H1 (cell line): ENCODE measurements at regions of chr14 and their contacts with region 1.

Region 1: DNA sequence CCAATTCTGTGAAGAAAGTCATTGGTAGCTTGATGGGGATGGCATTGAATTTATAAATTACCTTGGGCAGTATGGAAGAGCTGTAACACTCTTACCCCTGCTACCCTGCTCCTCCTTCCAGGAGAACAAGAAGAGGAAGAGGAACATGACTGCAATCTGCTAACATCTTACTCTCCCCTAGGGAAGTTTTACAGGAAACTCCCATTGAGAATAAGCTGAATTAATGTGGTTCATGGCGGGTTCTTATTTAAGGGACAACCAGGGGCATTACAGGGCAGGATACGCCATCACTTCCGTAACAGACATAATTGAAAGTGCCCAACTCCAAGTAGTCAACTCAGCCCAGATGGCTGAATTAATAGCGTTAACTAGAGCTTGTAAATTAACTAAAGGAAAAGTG is 9.4 kb upstream of the PSMC1 start:
- DNase-seq: no peak
- H3K4me3 ChIP-seq: no peak overlapping the region
- H3K27ac ChIP-seq: no peak overlapping the region
- H3K4me1 ChIP-seq: no peaks in the 10 kb centered on the region
- H3K27me3 ChIP-seq: no peaks in the 10 kb centered on the region
- CTCF ChIP-seq: no peak
- EP300 ChIP-seq: no peak
- POLR2A ChIP-seq: no peak
- RAD21 ChIP-seq: no peak

Region 2: DNA sequence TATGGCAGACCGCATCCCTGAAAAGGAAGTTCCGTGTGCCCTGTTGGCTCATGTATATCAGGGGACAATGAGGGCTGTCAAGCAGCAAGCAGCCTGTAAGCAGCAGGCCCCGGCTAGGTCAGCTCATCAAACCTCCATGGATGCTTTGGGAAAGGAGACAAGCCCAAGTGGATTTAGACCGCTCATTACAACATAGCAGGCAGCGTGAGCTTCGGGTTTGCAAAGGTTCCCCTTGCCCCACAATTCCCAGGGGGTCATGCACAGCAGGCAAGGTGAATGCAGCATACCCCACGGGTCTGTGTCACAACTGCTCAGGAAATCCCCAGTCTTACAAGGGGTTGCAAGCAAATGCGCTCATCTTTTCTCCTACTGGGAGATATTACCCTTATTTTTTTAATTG is 130.5 kb before region 1 on chr14:
- CTCF ChIA-PET with region 1: no interaction called
- POLR2A ChIA-PET with region 1: no interaction called
- DNase-seq: no peak
- H3K4me3 ChIP-seq: no peak overlapping the region
- H3K27ac ChIP-seq: no peak overlapping the region
- H3K4me1 ChIP-seq: no peaks in the 10 kb centered on the region
- H3K27me3 ChIP-seq: no peaks in the 10 kb centered on the region
- CTCF ChIP-seq: no peak
- EP300 ChIP-seq: no peak
- POLR2A ChIP-seq: no peak
- RAD21 ChIP-seq: no peak

Region 3: GRCh38 chr14:90177539-90178189 is 69.3 kb before region 1 on chr14:
- CTCF ChIA-PET with region 1: no interaction called
- POLR2A ChIA-PET with region 1: no interaction called
- DNase-seq: no peak
- H3K4me3 ChIP-seq: no peak overlapping the region
- H3K27ac ChIP-seq: no peak overlapping the region
- H3K4me1 ChIP-seq: no peaks in the 10 kb centered on the region
- H3K27me3 ChIP-seq: peaks cover 0 to 1% (median 0%) of the 10 kb centered on the region in 4 experiments; a peak in 1 of 7 replicates
- CTCF ChIP-seq: no peak
- EP300 ChIP-seq: no peak
- POLR2A ChIP-seq: no peak
- RAD21 ChIP-seq: no peak

Region 4: DNA sequence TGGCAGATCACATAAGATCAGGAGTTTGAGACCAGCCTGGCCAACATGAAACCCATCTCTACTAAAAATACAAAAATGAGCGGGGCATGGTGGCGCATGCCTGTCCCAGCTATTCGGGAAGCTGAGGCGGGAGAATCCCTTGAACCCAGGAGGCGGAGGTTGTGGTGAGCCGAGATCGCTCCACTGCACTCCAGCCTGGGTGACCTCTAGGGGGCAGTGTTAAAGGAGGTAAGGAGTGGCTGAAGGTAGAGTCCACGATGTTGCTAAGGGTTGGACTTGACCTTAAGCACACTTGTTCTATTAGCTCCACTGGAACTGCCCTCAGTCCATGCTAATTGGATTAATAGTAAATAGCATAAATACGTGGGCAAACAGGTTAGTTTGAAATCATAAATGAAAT is 53.0 kb before region 1 on chr14:
- CTCF ChIA-PET with region 1: no interaction called
- POLR2A ChIA-PET with region 1: no interaction called
- DNase-seq: peak in 1 of 2 experiments; percentile 77
- H3K4me3 ChIP-seq: no peak overlapping the region
- H3K27ac ChIP-seq: no peak overlapping the region
- H3K4me1 ChIP-seq: no peaks in the 10 kb centered on the region
- H3K27me3 ChIP-seq: no peaks in the 10 kb centered on the region
- CTCF ChIP-seq: peak; percentile 58 to 81 (median 75)
- EP300 ChIP-seq: no peak
- POLR2A ChIP-seq: no peak
- RAD21 ChIP-seq: peak; percentile 44 to 56

Region 5: DNA sequence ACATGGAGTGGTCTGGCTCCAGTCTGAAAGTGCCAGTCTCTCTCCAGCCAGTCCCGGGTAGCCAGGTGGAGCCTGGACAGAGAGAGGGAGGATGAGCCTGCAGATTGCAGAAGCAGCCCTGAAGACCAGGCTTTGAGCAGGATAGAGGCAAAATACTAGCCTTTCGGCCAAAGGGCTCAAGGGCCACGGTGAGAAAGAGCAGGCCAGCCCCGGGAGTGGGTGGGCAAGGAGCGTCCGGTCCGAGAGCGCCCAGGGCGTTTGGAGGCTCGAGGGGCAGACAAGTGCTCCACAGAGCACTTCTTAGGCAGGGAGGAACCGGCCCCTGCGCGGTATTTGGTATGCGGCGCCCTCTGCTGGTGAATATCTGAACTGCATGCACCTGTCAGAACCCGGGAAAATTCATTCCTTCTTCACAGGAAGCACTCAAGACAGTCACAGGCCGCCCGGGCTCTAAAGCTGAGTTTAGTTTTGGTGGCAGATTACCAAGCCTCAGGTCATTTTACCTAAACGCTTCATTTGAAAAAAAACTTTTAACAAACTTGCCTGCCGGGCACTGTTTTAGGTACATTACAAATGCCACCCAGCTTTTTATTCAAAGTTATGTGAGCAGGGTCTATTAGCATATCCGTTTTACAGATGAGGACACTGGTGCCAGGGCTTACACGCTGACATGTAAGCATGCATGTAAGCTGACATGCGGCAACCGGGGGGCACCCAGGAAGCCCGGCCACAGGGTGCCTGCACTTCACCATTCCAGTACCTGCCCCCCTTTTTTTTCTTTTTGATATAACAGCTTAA is 11.6 kb before region 1 on chr14:
- CTCF ChIA-PET with region 1: interaction called, 12 read pairs
- POLR2A ChIA-PET with region 1: no interaction called
- DNase-seq: peak; percentile 77 to 95
- H3K4me3 ChIP-seq: no peak overlapping the region; a peak in 2 of 8 replicates
- H3K27ac ChIP-seq: no peak overlapping the region
- H3K4me1 ChIP-seq: no peaks in the 10 kb centered on the region; a peak in 1 of 7 replicates
- H3K27me3 ChIP-seq: peaks cover 4 to 11% (median 7%) of the 10 kb centered on the region in 4 experiments
- CTCF ChIP-seq: peak; percentile 77 to 90 (median 87)
- EP300 ChIP-seq: no peak
- POLR2A ChIP-seq: no peak
- RAD21 ChIP-seq: peak; percentile 94 to 95